ENCODE measurements at regions of chr1 and their contacts with region 1.

Region 1: DNA sequence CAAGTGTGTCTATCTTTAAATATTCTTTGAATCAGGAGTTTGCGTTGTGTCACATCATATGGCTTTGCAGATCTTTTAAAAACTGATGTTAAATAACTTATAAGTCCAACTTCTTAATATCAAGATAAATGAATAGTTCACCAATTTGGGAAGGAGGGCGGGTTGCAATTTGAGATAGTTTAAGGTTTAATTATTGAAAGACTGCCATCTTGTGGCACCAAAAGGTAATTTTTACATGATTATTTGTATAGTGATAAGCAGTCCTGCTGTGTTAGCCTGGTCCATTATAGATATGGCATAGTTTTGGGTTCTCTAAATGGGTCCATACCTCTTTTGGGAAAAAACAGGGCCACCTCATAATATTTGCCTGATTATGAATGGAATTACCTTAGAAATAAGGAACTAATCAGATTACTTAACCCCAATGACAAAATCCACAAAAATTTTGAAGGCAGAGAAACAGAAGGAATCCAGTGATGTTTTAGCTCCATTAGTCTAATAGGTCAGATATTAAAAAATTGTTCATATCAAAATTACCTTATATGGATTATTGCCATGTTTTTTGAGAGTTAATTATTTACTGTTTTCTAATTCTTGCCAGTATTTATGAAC is 64.3 kb downstream of the PRKAA2 start:
- DNase-seq: no peak
- ATAC-seq: peak; percentile 85
- H3K4me3 ChIP-seq: no peak overlapping the region
- H3K27ac ChIP-seq: no peak overlapping the region
- H3K4me1 ChIP-seq: no peaks in the 10 kb centered on the region
- H3K27me3 ChIP-seq: no peaks in the 10 kb centered on the region
- CTCF ChIP-seq: peak; percentile 33 to 57 (median 44); a peak in 4 of 6 replicates
- EP300 ChIP-seq: no peak
- POLR2A ChIP-seq: no peak
- RAD21 ChIP-seq: peak; percentile 45

Region 2: DNA sequence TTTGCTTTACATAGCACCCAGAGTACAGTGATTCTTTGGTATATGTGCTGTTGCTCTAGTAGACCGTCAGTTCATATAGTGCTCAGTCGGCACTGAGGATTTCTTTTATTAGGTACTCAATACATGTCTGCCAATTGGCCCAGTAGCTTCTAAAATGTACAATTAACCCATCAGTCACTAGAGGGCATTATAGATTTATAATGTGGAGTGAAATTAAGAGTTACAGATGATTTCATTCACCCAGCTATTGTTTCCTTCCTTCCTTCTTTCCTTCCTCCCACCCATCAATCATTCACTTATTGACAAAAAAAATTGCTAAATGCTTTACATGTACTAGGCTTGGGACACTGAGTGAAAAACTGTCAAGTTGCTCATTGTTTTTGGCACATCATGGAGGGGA is 1230.6 kb before region 1 on chr1:
- CTCF ChIA-PET with region 1: interaction called, 29 read pairs
- POLR2A ChIA-PET with region 1: no interaction called
- RAD21 ChIA-PET with region 1: interaction called, 12 read pairs
- SMC1A ChIA-PET with region 1: interaction called, 10 read pairs
- in situ Hi-C with region 1: no loop called
- intact Hi-C with region 1: loop called (anchors 2 kb)
- DNase-seq: no peak
- ATAC-seq: peak; percentile 69
- H3K4me3 ChIP-seq: no peak overlapping the region
- H3K27ac ChIP-seq: no peak overlapping the region
- H3K4me1 ChIP-seq: no peaks in the 10 kb centered on the region
- H3K27me3 ChIP-seq: 0 out of 4 replicates have a peak, but pooled peaks cover 0 to 1% of the 10 kb centered on the region in 2 experiments
- CTCF ChIP-seq: peak in 2 of 3 experiments; percentile 7 to 34; a peak in 2 of 6 replicates
- EP300 ChIP-seq: no peak
- POLR2A ChIP-seq: no peak
- RAD21 ChIP-seq: no peak

Region 3: DNA sequence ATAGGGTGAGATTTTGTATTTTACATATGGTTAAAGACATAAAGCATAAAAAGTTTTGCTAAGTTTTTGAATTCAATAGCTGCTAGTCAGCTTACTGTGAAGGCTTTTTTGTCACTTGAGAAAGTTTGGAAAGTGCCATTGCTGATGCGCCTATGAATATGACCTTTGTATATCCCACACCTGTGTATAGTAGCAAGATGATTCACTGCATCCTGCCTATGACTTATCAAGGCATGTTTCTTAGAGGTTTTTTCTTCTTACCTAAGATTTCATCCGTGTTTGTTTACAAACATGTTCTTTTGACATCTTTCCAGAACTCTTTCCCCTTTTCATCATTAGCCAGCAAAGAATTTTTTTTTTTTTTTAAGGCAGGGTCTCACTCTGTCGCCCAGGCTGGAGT is 12.7 kb before region 1 on chr1:
- CTCF ChIA-PET with region 1: interaction called, 26 read pairs
- POLR2A ChIA-PET with region 1: no interaction called
- RAD21 ChIA-PET with region 1: interaction called, 4 read pairs
- SMC1A ChIA-PET with region 1: interaction called, 9 read pairs
- in situ Hi-C with region 1: no loop called
- intact Hi-C with region 1: no loop called
- DNase-seq: no peak
- ATAC-seq: no peak
- H3K4me3 ChIP-seq: no peak overlapping the region
- H3K27ac ChIP-seq: no peak overlapping the region
- H3K4me1 ChIP-seq: no peaks in the 10 kb centered on the region
- H3K27me3 ChIP-seq: no peaks in the 10 kb centered on the region
- CTCF ChIP-seq: no peak
- EP300 ChIP-seq: no peak
- POLR2A ChIP-seq: no peak
- RAD21 ChIP-seq: no peak

Measured in GM12878 (cell line).